Activated B cell treated with CpG ODN at 0.5 μM for 24 hours (primary cell): ENCODE measurements at regions of chr13 and their contacts with region 1.

Region 1: GRCh38 chr13:27620377-27621115 is at the start of gene LNX2:
- DNase-seq: peak; percentile 97
- ATAC-seq: peak; percentile 87
- H3K4me3 Mint-ChIP-seq: peak within 1 kb of the TSS; percentile 93
- H3K27ac Mint-ChIP-seq: peak within 1 kb of the TSS; percentile 93
- H3K4me1 Mint-ChIP-seq: peaks cover 54% of the 10 kb centered on the region
- H3K27me3 Mint-ChIP-seq: no peaks in the 10 kb centered on the region
- CTCF ChIP-seq: no peak
- total RNA-seq, gene LNX2: 6.1 and 7.1 TPM in 2 replicates

Region 2: GRCh38 chr13:26785838-26786630 is 834.5 kb before region 1 on chr13:
- CTCF ChIA-PET with region 1: no interaction called
- POLR2A ChIA-PET with region 1: no interaction called
- intact Hi-C with region 1: loop called (anchors 5 kb)
- DNase-seq: peak; percentile 50
- ATAC-seq: peak; percentile 66
- H3K4me3 Mint-ChIP-seq: peak overlapping the region; percentile 86
- H3K27ac Mint-ChIP-seq: peak overlapping the region; percentile 80
- H3K4me1 Mint-ChIP-seq: peaks cover 22% of the 10 kb centered on the region
- H3K27me3 Mint-ChIP-seq: peaks cover 3% of the 10 kb centered on the region
- CTCF ChIP-seq: no peak

Region 3: GRCh38 chr13:27562457-27562856 is 58.1 kb before region 1 on chr13:
- CTCF ChIA-PET with region 1: no interaction called
- POLR2A ChIA-PET with region 1: no interaction called
- intact Hi-C with region 1: loop called (anchors 2 kb)
- DNase-seq: no peak
- ATAC-seq: no peak
- H3K4me3 Mint-ChIP-seq: no peak overlapping the region
- H3K27ac Mint-ChIP-seq: no peak overlapping the region
- H3K4me1 Mint-ChIP-seq: no peaks in the 10 kb centered on the region
- H3K27me3 Mint-ChIP-seq: no peaks in the 10 kb centered on the region
- CTCF ChIP-seq: no peak